ENCODE measurements at regions of chr2 and their contacts with region 1.

Region 1: GRCh38 chr2:158381205-158381604 is 75.3 kb downstream of the CCDC148 start:
- DNase-seq: no peak
- ATAC-seq: no peak
- H3K4me3 ChIP-seq: no peak overlapping the region
- H3K4me3 Mint-ChIP-seq: no peak overlapping the region
- H3K27ac ChIP-seq: no peak overlapping the region
- H3K27ac Mint-ChIP-seq: no peak overlapping the region
- H3K4me1 ChIP-seq: no peaks in the 10 kb centered on the region
- H3K4me1 Mint-ChIP-seq: no peaks in the 10 kb centered on the region
- H3K27me3 ChIP-seq: no peaks in the 10 kb centered on the region
- H3K27me3 Mint-ChIP-seq: peaks cover 2% of the 10 kb centered on the region
- CTCF ChIP-seq: no peak

Region 2: DNA sequence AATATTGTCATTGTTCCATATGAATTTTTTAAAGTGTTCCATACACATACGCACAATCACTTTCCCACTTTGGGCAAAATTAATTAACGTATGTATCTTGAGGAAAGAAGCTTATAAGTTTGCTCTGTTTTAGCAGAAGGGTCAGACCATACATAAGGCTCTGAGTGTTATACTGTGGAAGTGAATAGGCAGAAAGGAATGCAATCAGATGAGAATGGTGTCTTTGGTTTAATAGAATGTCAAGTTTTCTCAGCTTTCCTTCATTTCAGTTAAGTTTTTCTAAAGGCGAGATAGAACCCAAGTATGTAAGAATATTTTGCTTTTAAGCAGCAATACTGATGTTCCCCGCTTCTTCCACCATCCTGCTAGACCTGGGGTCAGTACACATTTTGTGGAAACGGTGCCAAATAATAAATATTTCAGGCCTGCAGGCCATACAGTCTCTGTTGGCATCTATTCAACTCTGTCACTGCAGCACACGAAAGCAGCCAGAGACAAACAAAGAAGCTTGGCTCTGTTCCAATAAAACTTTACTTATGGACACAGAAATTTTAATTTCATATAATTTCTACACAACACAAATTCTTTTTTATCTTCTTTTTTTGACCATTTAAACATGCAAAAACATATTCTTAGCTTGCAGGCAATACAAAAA is 178.9 kb before region 1 on chr2:
- CTCF ChIA-PET with region 1: no interaction called
- POLR2A ChIA-PET with region 1: no interaction called
- intact Hi-C with region 1: no loop called
- DNase-seq: no peak
- ATAC-seq: no peak
- H3K4me3 ChIP-seq: no peak overlapping the region
- H3K4me3 Mint-ChIP-seq: no peak overlapping the region
- H3K27ac ChIP-seq: no peak overlapping the region
- H3K27ac Mint-ChIP-seq: no peak overlapping the region
- H3K4me1 ChIP-seq: no peaks in the 10 kb centered on the region
- H3K4me1 Mint-ChIP-seq: no peaks in the 10 kb centered on the region
- H3K27me3 ChIP-seq: no peaks in the 10 kb centered on the region
- H3K27me3 Mint-ChIP-seq: peaks cover 7% of the 10 kb centered on the region
- CTCF ChIP-seq: no peak

Region 3: DNA sequence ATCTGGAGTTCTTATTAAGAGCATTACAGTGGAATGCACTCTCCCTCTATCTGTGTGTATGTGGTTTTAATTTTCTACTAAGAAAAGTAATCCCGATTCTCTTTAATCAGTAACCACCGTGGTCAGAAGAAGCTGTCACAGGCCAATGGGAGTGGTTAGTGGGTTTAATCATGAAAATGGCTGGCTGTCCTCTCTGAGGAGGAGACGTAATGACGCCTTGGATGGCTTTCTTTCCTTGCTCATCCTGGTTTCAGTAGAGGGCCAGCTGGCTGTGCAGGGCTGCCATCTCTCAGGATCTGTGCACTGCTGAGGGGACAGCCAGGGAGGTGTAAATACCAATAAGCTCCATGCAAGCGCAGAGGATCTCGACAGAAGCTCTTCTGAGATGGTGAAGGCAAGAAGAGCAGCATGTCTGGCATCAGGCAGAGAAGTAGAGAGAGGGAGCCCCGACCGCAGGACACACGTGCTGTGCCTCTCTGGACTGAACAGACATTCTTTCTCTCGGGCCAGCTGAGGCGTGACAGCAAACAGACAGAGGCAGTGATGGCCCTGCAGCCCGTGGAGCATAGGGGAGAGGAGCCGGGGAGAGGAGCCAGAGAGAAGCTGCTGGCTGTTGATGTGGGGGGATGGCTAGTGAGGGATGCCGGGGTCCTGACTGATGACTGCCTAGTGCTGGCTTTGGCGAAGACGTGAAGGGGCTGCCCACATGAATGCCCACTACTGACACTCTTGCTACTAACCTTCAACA is 348.8 kb after region 1 on chr2:
- CTCF ChIA-PET with region 1: no interaction called
- POLR2A ChIA-PET with region 1: no interaction called
- intact Hi-C with region 1: loop called in 1 of 2 experiments (anchors 10 kb)
- DNase-seq: no peak
- ATAC-seq: no peak
- H3K4me3 ChIP-seq: no peak overlapping the region
- H3K4me3 Mint-ChIP-seq: no peak overlapping the region
- H3K27ac ChIP-seq: no peak overlapping the region
- H3K27ac Mint-ChIP-seq: no peak overlapping the region
- H3K4me1 ChIP-seq: no peaks in the 10 kb centered on the region
- H3K4me1 Mint-ChIP-seq: no peaks in the 10 kb centered on the region
- H3K27me3 ChIP-seq: no peaks in the 10 kb centered on the region
- H3K27me3 Mint-ChIP-seq: no peaks in the 10 kb centered on the region
- CTCF ChIP-seq: no peak